ENCODE measurements at regions of chr1 and their contacts with region 1.

Region 1: GRCh38 chr1:154669464-154670282 is 61.7 kb upstream of the ADAR start:
- DNase-seq: peak; percentile 40 to 81 (median 73)
- ATAC-seq: peak; percentile 100
- H3K4me3 ChIP-seq: no peak overlapping the region
- H3K4me3 Mint-ChIP-seq: no peak overlapping the region
- H3K27ac ChIP-seq: no peak overlapping the region
- H3K27ac Mint-ChIP-seq: peak overlapping the region in 1 of 9 donors; percentile 30
- H3K4me1 ChIP-seq: no peaks in the 10 kb centered on the region
- H3K4me1 Mint-ChIP-seq: peaks cover 0 to 13% (median 5%) of the 10 kb centered on the region in 7 donors
- H3K27me3 ChIP-seq: no peaks in the 10 kb centered on the region
- H3K27me3 Mint-ChIP-seq: peaks cover 0 to 4% (median 0%) of the 10 kb centered on the region in 5 donors

Region 2: DNA sequence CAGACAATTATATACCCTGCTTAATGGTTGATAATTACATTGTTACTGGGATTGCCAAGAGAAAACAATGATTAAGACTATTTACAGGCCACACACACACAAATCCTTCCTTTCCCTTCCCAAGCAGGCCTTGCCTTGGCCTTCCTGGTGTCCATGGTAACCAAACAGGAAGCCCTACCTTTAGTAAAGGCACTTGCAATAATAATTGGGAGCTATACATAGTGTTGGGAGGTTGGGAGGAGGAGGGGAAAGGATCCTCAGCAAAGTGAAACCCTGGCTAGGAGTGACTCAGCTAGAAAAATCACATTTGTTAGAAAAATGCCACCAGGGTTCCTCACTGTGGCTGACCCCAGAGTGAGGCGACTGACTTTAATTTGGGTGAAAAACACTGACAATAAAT is 60.6 kb after region 1 on chr1:
- CTCF ChIA-PET with region 1: no interaction called
- POLR2A ChIA-PET with region 1: no interaction called
- intact Hi-C with region 1: no loop called
- DNase-seq: no peak
- ATAC-seq: no peak
- H3K4me3 ChIP-seq: no peak overlapping the region
- H3K4me3 Mint-ChIP-seq: no peak overlapping the region
- H3K27ac ChIP-seq: no peak overlapping the region
- H3K27ac Mint-ChIP-seq: no peak overlapping the region
- H3K4me1 ChIP-seq: no peaks in the 10 kb centered on the region
- H3K4me1 Mint-ChIP-seq: peaks cover 0 to 53% (median 4%) of the 10 kb centered on the region in 7 donors
- H3K27me3 ChIP-seq: no peaks in the 10 kb centered on the region
- H3K27me3 Mint-ChIP-seq: peaks cover 0 to 13% (median 4%) of the 10 kb centered on the region in 5 donors

Region 3: DNA sequence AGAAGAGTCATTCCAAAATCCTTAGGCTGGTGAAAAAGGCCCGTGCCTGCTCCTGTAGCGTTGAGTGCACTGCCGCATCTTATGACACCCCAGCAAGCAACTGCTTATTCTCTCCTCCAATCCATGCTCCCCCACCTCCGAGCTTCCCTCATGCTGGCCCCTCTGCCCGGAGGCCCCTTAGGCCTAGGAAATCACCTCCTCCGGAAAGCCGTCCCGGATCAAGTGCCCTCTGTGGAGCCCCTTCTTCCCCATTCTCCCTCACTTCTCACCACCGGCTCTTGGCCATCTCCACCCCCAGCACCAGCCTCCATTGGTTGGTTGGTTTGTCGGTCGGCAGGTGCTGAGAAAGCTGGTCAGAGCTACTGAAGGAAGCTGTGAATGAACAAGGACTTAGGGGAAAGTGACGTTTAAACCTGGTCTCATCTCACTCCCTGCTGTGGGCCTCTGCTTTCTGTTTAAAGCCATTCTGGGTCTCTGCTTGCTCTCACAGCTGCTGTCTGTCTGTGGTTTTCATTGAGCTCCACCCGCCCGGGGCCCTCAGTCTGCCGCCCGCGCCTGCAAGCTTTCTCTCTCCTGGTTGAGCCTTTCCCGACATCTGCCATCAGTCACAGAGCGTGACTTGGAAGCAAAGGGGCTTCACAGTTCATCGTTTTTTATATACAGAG is 78.2 kb after region 1 on chr1:
- CTCF ChIA-PET with region 1: interaction called, 6 read pairs
- POLR2A ChIA-PET with region 1: no interaction called
- intact Hi-C with region 1: loop called in 1 of 2 experiments (anchors 1 kb)
- DNase-seq: peak in 8 of 9 donors; percentile 51 to 64 (median 56)
- ATAC-seq: peak; percentile 82
- H3K4me3 ChIP-seq: peak overlapping the region; percentile 46
- H3K4me3 Mint-ChIP-seq: peak overlapping the region; percentile 71 to 88 (median 84)
- H3K27ac ChIP-seq: peak overlapping the region; percentile 73
- H3K27ac Mint-ChIP-seq: peak overlapping the region; percentile 90 to 98 (median 96)
- H3K4me1 ChIP-seq: peaks cover 39 to 47% of the 10 kb centered on the region in 2 donors
- H3K4me1 Mint-ChIP-seq: peaks cover 46 to 70% (median 51%) of the 10 kb centered on the region in 7 donors
- H3K27me3 ChIP-seq: no peaks in the 10 kb centered on the region
- H3K27me3 Mint-ChIP-seq: peaks cover 0 to 24% (median 0%) of the 10 kb centered on the region in 5 donors

Region 4: DNA sequence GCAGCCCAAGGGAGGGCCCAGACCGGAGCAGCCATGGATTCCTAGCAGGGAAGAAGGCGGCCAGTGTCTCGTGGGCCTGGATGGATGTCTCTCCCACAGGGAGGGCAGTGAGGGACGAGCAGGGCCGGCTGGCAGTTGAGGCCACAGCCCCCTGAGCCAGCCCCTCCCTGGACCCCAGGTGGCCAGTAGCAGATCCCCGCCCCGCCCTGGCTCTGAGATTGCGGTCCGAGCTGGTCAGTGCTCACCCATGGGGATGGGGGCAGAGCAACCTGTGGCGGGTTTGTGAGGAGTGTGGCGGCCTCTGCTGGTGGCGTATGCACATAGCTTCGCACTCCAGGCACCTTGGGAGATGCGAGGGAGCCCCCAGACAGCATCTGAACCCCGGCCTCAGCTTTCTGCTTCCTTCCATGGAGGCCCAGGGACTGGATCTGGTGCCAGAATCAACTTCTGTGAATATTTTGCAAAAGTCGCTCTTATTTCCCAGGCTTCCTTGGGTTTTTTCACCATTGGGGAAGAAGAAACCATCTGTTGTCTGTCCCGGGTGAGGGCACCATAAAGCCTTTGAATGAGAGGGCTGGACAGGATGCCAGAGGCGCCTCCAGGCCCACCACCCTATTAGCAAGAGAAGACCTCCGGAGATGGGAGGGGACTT is 208.8 kb after region 1 on chr1:
- CTCF ChIA-PET with region 1: interaction called, 18 read pairs
- POLR2A ChIA-PET with region 1: interaction called, 3 read pairs
- intact Hi-C with region 1: loop called (anchors 1 kb)
- DNase-seq: peak; percentile 43 to 73 (median 60)
- ATAC-seq: peak; percentile 94
- H3K4me3 ChIP-seq: no peak overlapping the region
- H3K4me3 Mint-ChIP-seq: no peak overlapping the region
- H3K27ac ChIP-seq: no peak overlapping the region
- H3K27ac Mint-ChIP-seq: peak overlapping the region in 1 of 9 donors; percentile 56
- H3K4me1 ChIP-seq: no peaks in the 10 kb centered on the region
- H3K4me1 Mint-ChIP-seq: peaks cover 0 to 8% (median 0%) of the 10 kb centered on the region in 7 donors
- H3K27me3 ChIP-seq: no peaks in the 10 kb centered on the region
- H3K27me3 Mint-ChIP-seq: peaks cover 0 to 2% (median 0%) of the 10 kb centered on the region in 5 donors